Heart left ventricle (tissue), 16 donors: ENCODE measurements at regions of chr16 and their contacts with region 1.

Region 1: GRCh38 chr16:81863630-81864352 is 84.7 kb downstream of the PLCG2 start:
- DNase-seq: no peak
- ATAC-seq: no peak
- H3K4me3 ChIP-seq: no peak overlapping the region
- H3K27ac ChIP-seq: no peak overlapping the region
- H3K4me1 ChIP-seq: peaks cover 0 to 23% (median 8%) of the 10 kb centered on the region in 12 donors
- H3K27me3 ChIP-seq: peaks cover 0 to 12% (median 0%) of the 10 kb centered on the region in 9 donors
- CTCF ChIP-seq: no peak
- POLR2A ChIP-seq: no peak

Region 2: GRCh38 chr16:81778861-81779535 is 84.8 kb before region 1 on chr16 and contains the start of gene PLCG2:
- intact Hi-C with region 1: loop called in 2 of 10 experiments (anchors 10 kb)
- DNase-seq: peak; percentile 69 to 89 (median 80)
- ATAC-seq: peak; percentile 63 to 94 (median 91)
- H3K4me3 ChIP-seq: peak within 1 kb of the TSS; percentile 32 to 82 (median 70)
- H3K27ac ChIP-seq: peak within 1 kb of the TSS in 9 of 12 donors; percentile 33 to 84 (median 62)
- H3K4me1 ChIP-seq: peaks cover 0 to 35% (median 9%) of the 10 kb centered on the region in 12 donors
- H3K27me3 ChIP-seq: peaks cover 0 to 14% (median 2%) of the 10 kb centered on the region in 9 donors
- CTCF ChIP-seq: no peak
- POLR2A ChIP-seq: peak in 1 of 2 donors; percentile 58
- total RNA-seq, gene PLCG2: 3.7 to 35.4 (median 6.0) TPM

Region 3: DNA sequence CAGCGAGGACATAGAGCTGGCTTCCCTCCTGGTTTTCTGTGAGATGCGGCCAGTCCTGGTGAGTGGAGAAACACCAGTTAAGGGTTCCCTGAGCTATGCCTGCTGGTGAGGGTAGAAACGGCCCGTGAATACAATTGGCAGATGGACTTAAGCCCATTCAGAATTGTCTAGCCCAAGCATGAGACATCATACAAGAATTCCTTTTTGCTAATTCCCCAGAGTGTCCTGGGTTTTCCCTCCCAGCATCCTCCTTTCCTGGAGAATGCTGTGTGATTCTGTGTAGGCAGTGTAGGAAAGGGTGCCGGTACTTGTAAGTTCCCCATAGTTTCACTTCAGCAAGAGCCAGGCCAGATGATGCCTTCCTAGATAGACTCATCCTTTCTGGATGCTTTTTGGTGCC is 82.4 kb after region 1 on chr16:
- intact Hi-C with region 1: no loop called
- DNase-seq: no peak
- ATAC-seq: no peak
- H3K4me3 ChIP-seq: no peak overlapping the region
- H3K27ac ChIP-seq: no peak overlapping the region
- H3K4me1 ChIP-seq: peaks cover 0 to 1% (median 0%) of the 10 kb centered on the region in 12 donors
- H3K27me3 ChIP-seq: peaks cover 0 to 7% (median 0%) of the 10 kb centered on the region in 9 donors
- CTCF ChIP-seq: no peak
- POLR2A ChIP-seq: no peak